Psoas muscle (tissue), 8 donors: ENCODE measurements at regions of chr14 and their contacts with region 1.

Region 1: GRCh38 chr14:100662879-100663760 is 63.6 kb upstream of the DLK1 start:
- DNase-seq: peak; percentile 70 to 78
- ATAC-seq: peak in 2 of 4 donors; percentile 50 to 64
- H3K4me3 ChIP-seq: no peak overlapping the region
- H3K27ac ChIP-seq: no peak overlapping the region
- H3K4me1 ChIP-seq: no peaks in the 10 kb centered on the region
- H3K27me3 ChIP-seq: peaks cover 0 to 46% (median 14%) of the 10 kb centered on the region in 3 donors
- CTCF ChIP-seq: peak; percentile 88

Region 2: GRCh38 chr14:100822532-100823296 is 159.6 kb after region 1 on chr14:
- intact Hi-C with region 1: loop called in 1 of 2 experiments (anchors 2 kb)
- DNase-seq: no peak
- ATAC-seq: no peak
- H3K4me3 ChIP-seq: no peak overlapping the region
- H3K27ac ChIP-seq: no peak overlapping the region
- H3K4me1 ChIP-seq: no peaks in the 10 kb centered on the region
- H3K27me3 ChIP-seq: peaks cover 0 to 41% (median 20%) of the 10 kb centered on the region in 3 donors
- CTCF ChIP-seq: no peak

Region 3: DNA sequence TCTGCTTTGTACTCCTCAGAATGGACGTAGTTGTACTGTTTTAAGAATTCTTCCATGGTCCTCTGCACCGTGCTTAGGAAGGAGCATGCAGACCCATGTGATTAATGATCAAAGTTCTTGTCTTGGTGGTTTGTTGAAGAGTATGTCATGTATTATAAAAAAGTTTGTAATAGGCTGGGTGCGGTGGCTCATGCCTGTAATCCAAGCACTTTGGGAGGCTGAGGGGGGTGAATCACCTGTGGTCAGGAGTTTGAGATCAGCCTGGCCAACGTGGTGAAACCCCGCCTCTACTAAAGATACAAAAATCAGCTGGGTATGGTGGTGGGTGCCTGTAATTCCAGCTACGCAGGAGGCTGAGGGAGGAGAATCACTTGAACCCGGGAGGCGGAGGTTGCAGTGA is 302.2 kb after region 1 on chr14:
- intact Hi-C with region 1: no loop called
- DNase-seq: no peak
- ATAC-seq: no peak
- H3K4me3 ChIP-seq: no peak overlapping the region
- H3K27ac ChIP-seq: no peak overlapping the region
- H3K4me1 ChIP-seq: no peaks in the 10 kb centered on the region
- H3K27me3 ChIP-seq: no peaks in the 10 kb centered on the region
- CTCF ChIP-seq: no peak